Activated naive CD8-positive, alpha-beta T cell treated with anti-CD3 and anti-CD28 coated beads, Interleukin-2, amount 10 ng/mL, durations not matched to agents 7 days and 5 days (primary cell): ENCODE measurements at regions of chr5 and their contacts with region 1.

Region 1: DNA sequence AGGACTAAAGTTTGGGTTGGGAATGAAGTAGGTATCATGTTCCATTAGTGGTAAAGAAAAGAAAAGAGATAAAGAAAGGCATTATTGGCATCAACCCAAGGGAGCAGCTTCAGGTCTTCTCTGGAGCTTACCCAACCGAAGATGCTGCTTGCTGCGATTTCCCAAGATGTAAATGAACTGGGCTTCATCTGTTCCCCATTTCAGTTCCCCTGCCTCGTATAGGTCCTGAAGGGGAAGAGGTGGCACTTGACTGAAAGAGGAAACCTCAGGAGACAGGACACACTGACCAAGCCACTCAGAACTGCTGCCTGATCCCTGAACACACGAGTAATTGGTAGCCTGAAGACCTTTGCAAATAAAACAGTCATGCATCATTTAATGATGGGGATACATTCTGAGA is 24.6 kb downstream of the ANXA6 start:
- DNase-seq: no peak
- ATAC-seq: no peak
- H3K4me3 Mint-ChIP-seq: no peak overlapping the region
- H3K27ac Mint-ChIP-seq: no peak overlapping the region
- H3K4me1 Mint-ChIP-seq: peaks cover 44% of the 10 kb centered on the region
- H3K27me3 Mint-ChIP-seq: no peaks in the 10 kb centered on the region

Region 2: GRCh38 chr5:151150471-151151262 is 17.7 kb after region 1 on chr5:
- POLR2A ChIA-PET with region 1: interaction called, 15 read pairs
- DNase-seq: peak; percentile 71
- ATAC-seq: peak; percentile 82
- H3K4me3 Mint-ChIP-seq: peak overlapping the region; percentile 97
- H3K27ac Mint-ChIP-seq: peak overlapping the region; percentile 95
- H3K4me1 Mint-ChIP-seq: peaks cover 90% of the 10 kb centered on the region
- H3K27me3 Mint-ChIP-seq: no peaks in the 10 kb centered on the region

Region 3: GRCh38 chr5:151183451-151184245 is 50.7 kb after region 1 on chr5:
- POLR2A ChIA-PET with region 1: no interaction called
- DNase-seq: no peak
- ATAC-seq: no peak
- H3K4me3 Mint-ChIP-seq: no peak overlapping the region
- H3K27ac Mint-ChIP-seq: no peak overlapping the region
- H3K4me1 Mint-ChIP-seq: peaks cover 7% of the 10 kb centered on the region
- H3K27me3 Mint-ChIP-seq: no peaks in the 10 kb centered on the region

Region 4: GRCh38 chr5:151239237-151239861 is 106.4 kb after region 1 on chr5:
- POLR2A ChIA-PET with region 1: no interaction called
- DNase-seq: peak; percentile 75
- ATAC-seq: peak; percentile 66
- H3K4me3 Mint-ChIP-seq: peak overlapping the region; percentile 68
- H3K27ac Mint-ChIP-seq: peak overlapping the region; percentile 76
- H3K4me1 Mint-ChIP-seq: peaks cover 32% of the 10 kb centered on the region
- H3K27me3 Mint-ChIP-seq: no peaks in the 10 kb centered on the region